Activated B cell treated with CpG ODN at 0.5 μM for 24 hours (primary cell): ENCODE measurements at regions of chr5 and their contacts with region 1.

Region 1: DNA sequence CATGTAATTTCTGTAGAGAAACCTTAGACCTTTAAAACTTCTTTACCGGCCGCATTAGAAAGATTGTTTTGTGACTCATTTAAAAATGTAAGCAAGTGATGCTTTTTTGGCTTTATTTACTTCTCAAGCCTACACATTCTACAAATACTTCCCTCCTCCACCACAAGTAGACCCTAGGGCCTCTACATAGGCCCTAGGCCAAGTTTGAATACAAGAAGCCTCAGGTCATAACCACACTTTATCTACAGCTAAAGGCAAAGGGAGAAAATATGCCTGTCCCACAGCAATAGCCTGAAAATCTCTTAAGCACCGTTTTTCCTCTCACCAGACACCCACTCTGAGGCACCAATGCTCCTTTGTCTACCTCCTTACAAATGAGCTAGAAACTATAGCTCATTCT is 53.9 kb downstream of the CSNK1A1 start:
- DNase-seq: no peak
- ATAC-seq: no peak
- H3K4me3 Mint-ChIP-seq: no peak overlapping the region
- H3K27ac Mint-ChIP-seq: no peak overlapping the region
- H3K4me1 Mint-ChIP-seq: peaks cover 2% of the 10 kb centered on the region
- H3K27me3 Mint-ChIP-seq: no peaks in the 10 kb centered on the region
- CTCF ChIP-seq: no peak

Region 2: DNA sequence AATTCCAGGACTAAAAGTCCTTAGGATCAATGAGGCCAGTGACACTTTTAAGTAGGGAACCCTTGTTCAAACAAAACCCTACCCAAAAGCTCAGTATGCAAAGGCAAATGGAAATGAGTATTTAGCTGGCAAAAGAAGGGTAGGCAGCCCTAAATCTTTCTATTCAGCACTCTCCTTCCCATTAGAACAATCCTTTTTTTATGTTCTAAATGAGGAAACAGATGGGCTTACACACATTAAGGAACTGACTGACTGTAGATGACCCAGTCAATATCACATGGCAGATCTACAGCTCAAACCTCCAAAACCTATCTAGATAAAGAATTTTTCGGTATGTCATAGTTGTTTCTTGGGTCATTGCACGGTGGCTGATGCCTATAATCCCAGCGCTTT is 46.7 kb after region 1 on chr5:
- CTCF ChIA-PET with region 1: no interaction called
- POLR2A ChIA-PET with region 1: interaction called, 16 read pairs
- intact Hi-C with region 1: loop called (anchors 10 kb)
- DNase-seq: no peak
- ATAC-seq: no peak
- H3K4me3 Mint-ChIP-seq: no peak overlapping the region
- H3K27ac Mint-ChIP-seq: no peak overlapping the region
- H3K4me1 Mint-ChIP-seq: peaks cover 57% of the 10 kb centered on the region
- H3K27me3 Mint-ChIP-seq: no peaks in the 10 kb centered on the region
- CTCF ChIP-seq: no peak